Panc1 (cell line): ENCODE measurements at regions of chr11 and their contacts with region 1.

Region 1: GRCh38 chr11:26993965-26994457 is at the start of gene FIBIN:
- DNase-seq: no peak
- ATAC-seq: no peak
- H3K4me3 ChIP-seq: peak within 1 kb of the TSS in 1 of 2 experiments; percentile 23; a peak in 2 of 4 replicates
- H3K27ac ChIP-seq: no peak within 1 kb of the TSS
- H3K4me1 ChIP-seq: no peaks in the 10 kb centered on the region
- H3K27me3 ChIP-seq: peaks cover 5% of the 10 kb centered on the region
- CTCF ChIP-seq: no peak
- total RNA-seq, gene FIBIN: not detected

Region 2: GRCh38 chr11:26839911-26840698 is 153.9 kb before region 1 on chr11:
- CTCF ChIA-PET with region 1: no interaction called
- POLR2A ChIA-PET with region 1: interaction called, 14 read pairs
- in situ Hi-C with region 1: no loop called
- intact Hi-C with region 1: no loop called
- DNase-seq: no peak
- ATAC-seq: no peak
- H3K4me3 ChIP-seq: no peak overlapping the region
- H3K27ac ChIP-seq: no peak overlapping the region
- H3K4me1 ChIP-seq: no peaks in the 10 kb centered on the region
- H3K27me3 ChIP-seq: no peaks in the 10 kb centered on the region
- CTCF ChIP-seq: no peak

Region 3: DNA sequence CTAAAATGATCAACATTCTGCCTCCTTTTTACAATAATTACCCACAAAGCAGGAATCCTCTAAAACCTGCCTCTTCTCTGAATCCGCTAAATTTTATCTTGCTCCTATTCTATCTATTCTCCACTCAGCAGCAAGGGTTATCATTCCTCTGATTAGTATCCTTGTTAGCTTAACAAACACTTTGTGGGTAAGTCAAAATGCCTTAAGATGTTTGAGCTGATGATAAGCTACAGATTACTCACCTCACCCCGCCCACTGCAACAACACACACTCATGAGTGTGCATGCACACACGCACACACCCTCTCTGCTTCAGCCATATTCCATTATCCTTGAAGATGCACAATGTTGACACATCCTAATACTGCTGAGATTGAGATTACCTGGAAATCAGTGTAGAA is 177.4 kb after region 1 on chr11:
- CTCF ChIA-PET with region 1: no interaction called
- POLR2A ChIA-PET with region 1: no interaction called
- in situ Hi-C with region 1: no loop called
- intact Hi-C with region 1: no loop called
- DNase-seq: no peak
- ATAC-seq: no peak
- H3K4me3 ChIP-seq: no peak overlapping the region
- H3K27ac ChIP-seq: no peak overlapping the region
- H3K4me1 ChIP-seq: no peaks in the 10 kb centered on the region
- H3K27me3 ChIP-seq: no peaks in the 10 kb centered on the region; the same call in 1 of the 2 replicates
- CTCF ChIP-seq: no peak